Mammary epithelial cell (primary cell): ENCODE measurements at regions of chr10 and their contacts with region 1.

Region 1: GRCh38 chr10:58590152-58590840 is 77.6 kb downstream of the BICC1 start:
- DNase-seq: peak; percentile 74
- H3K4me3 ChIP-seq: no peak overlapping the region
- H3K27ac ChIP-seq: no peak overlapping the region
- H3K4me1 ChIP-seq: peaks cover 28% of the 10 kb centered on the region
- H3K27me3 ChIP-seq: no peaks in the 10 kb centered on the region
- CTCF ChIP-seq: no peak

Region 2: GRCh38 chr10:58662314-58662713 is 72.0 kb after region 1 on chr10:
- CTCF ChIA-PET with region 1: no interaction called
- dilution Hi-C with region 1: no loop called
- in situ Hi-C with region 1: no loop called
- intact Hi-C with region 1: no loop called
- DNase-seq: peak; percentile 90
- H3K4me3 ChIP-seq: peak overlapping the region in 1 of 3 experiments; percentile 19
- H3K27ac ChIP-seq: peak overlapping the region; percentile 95
- H3K4me1 ChIP-seq: peaks cover 44% of the 10 kb centered on the region
- H3K27me3 ChIP-seq: no peaks in the 10 kb centered on the region
- CTCF ChIP-seq: no peak

Region 3: GRCh38 chr10:58691528-58691927 is 101.2 kb after region 1 on chr10:
- CTCF ChIA-PET with region 1: no interaction called
- dilution Hi-C with region 1: loop called (anchors 5 kb)
- in situ Hi-C with region 1: no loop called
- intact Hi-C with region 1: no loop called
- DNase-seq: no peak
- H3K4me3 ChIP-seq: no peak overlapping the region
- H3K27ac ChIP-seq: no peak overlapping the region
- H3K4me1 ChIP-seq: no peaks in the 10 kb centered on the region
- H3K27me3 ChIP-seq: no peaks in the 10 kb centered on the region
- CTCF ChIP-seq: no peak